HepG2 (cell line): ENCODE measurements at regions of chr11 and their contacts with region 1.

Region 1: DNA sequence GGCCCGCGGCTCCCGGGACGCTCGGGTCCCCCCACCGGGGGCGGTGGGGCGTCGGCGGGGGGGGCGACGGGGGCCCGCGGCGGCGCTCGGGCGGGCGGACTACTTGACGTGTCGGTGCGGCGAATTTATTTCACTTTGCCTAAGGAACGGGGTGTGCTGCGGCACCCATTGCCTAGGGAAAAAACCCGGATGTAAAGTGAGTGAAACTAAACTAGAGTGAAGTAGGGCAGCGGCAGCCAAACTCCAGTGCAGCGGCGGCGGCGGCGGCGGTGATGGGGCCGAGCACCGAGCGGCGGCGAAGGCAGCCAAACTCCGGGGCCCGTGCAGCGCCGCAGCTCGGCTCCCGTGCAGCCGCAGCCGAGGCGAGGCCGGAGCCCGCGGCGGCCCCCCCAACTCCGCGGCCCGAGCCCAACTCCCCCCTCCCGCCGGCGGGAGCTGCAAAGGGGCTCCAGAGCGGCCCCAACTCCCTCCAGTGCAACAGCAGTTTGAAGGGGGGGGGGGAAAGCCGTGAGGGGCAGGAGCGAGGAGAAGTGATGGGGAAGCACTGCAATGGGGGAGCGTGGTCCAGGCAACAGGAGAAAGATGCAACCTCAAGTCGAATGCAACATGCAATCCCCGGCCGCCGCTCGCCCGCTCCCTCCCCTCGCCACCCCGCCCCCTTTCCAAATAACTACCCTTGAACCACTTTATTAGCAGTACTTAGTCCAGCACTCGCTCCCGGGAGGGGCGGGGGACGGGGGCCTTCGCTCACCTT is 647 bp upstream of the PHF21A start:
- DNase-seq: peak; percentile 82
- ATAC-seq: peak; percentile 57
- H3K4me3 ChIP-seq: peak overlapping the region; percentile 73 to 99 (median 78)
- H3K27ac ChIP-seq: peak overlapping the region; percentile 77
- H3K4me1 ChIP-seq: peaks cover 33% of the 10 kb centered on the region
- H3K27me3 ChIP-seq: peaks cover 0 to 2% of the 10 kb centered on the region in 2 experiments; a peak in 1 of 5 replicates
- CTCF ChIP-seq: no peak
- EP300 ChIP-seq: no peak
- POLR2A ChIP-seq: peak; percentile 11 to 63; a peak in 2 of 4 replicates
- RAD21 ChIP-seq: no peak

Region 2: GRCh38 chr11:46050003-46050461 is 71.9 kb before region 1 on chr11:
- CTCF ChIA-PET with region 1: no interaction called
- POLR2A ChIA-PET with region 1: no interaction called
- in situ Hi-C with region 1: no loop called
- intact Hi-C with region 1: loop called (anchors 10 kb)
- DNase-seq: peak; percentile 27
- ATAC-seq: no peak
- H3K4me3 ChIP-seq: no peak overlapping the region
- H3K27ac ChIP-seq: no peak overlapping the region
- H3K4me1 ChIP-seq: peaks cover 10% of the 10 kb centered on the region
- H3K27me3 ChIP-seq: no peaks in the 10 kb centered on the region
- CTCF ChIP-seq: no peak
- EP300 ChIP-seq: no peak
- POLR2A ChIP-seq: no peak
- RAD21 ChIP-seq: no peak